Head of caudate nucleus (tissue), 42 donors: ENCODE measurements at regions of chr16 and their contacts with region 1.

Region 1: GRCh38 chr16:14529010-14529669 is 100.9 kb downstream of the PARN start:
- DNase-seq: peak; percentile 53 to 89 (median 77)

Region 2: DNA sequence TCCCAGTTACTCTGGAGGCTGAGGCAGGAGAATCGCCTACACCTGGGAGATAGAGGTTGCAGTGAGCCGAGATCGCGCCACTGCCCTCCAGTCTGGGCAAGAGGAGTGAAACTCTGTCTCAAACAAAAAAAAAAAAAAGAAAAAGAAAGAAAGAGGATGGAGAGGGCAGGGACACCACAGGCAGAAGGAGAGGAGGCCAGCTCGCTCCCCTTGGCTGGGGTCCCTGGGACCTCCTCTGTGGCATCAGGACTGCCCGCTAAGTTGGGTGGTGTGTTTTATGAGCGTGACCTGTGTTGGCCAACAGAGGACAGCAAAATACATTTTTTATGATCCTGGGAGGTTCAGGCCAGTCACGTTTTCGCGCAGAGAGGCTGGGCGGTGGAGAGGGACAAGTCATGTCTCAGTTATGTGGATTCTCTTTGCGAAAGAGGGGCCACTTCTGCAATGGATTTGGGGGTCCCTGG is 228.4 kb before region 1 on chr16:
- intact Hi-C with region 1: loop called (anchors 10 kb)
- DNase-seq: peak in 37 of 42 donors; percentile 25 to 84 (median 57)

Region 3: GRCh38 chr16:14586637-14587305 is 57.6 kb after region 1 on chr16:
- intact Hi-C with region 1: no loop called
- DNase-seq: no peak